ENCODE measurements at regions of chr16 and their contacts with region 1.

Region 1: GRCh38 chr16:75514296-75514695 is 19.1 kb upstream of the CHST6 start:
- DNase-seq: no peak
- ATAC-seq: no peak
- H3K4me3 ChIP-seq: no peak overlapping the region
- H3K27ac ChIP-seq: no peak overlapping the region
- H3K4me1 ChIP-seq: peaks cover 0 to 10% (median 7%) of the 10 kb centered on the region in 9 donors
- H3K27me3 ChIP-seq: no peaks in the 10 kb centered on the region
- CTCF ChIP-seq: no peak

Region 2: GRCh38 chr16:75478074-75478473 is 36.2 kb before region 1 on chr16:
- intact Hi-C with region 1: loop called in 5 of 10 experiments (anchors 2 to 5 kb)
- DNase-seq: no peak
- ATAC-seq: peak in 1 of 8 donors; percentile 15
- H3K4me3 ChIP-seq: no peak overlapping the region
- H3K27ac ChIP-seq: no peak overlapping the region
- H3K4me1 ChIP-seq: no peaks in the 10 kb centered on the region
- H3K27me3 ChIP-seq: no peaks in the 10 kb centered on the region
- CTCF ChIP-seq: no peak

Measured in heart right ventricle (tissue), 16 donors.